ENCODE measurements at regions of chr12 and their contacts with region 1.

Region 1: GRCh38 chr12:109775172-109775881 is 57.9 kb downstream of the TRPV4 start:
- DNase-seq: peak; percentile 19
- H3K4me3 ChIP-seq: no peak overlapping the region
- CTCF ChIP-seq: peak; percentile 93

Region 2: GRCh38 chr12:109544955-109545531 is 230.3 kb before region 1 on chr12:
- in situ Hi-C with region 1: loop called (anchors 25 kb)
- DNase-seq: no peak
- H3K4me3 ChIP-seq: no peak overlapping the region
- CTCF ChIP-seq: no peak

Measured in astrocyte of the cerebellum (primary cell).